ENCODE measurements at regions of chr17 and their contacts with region 1.

Region 1: GRCh38 chr17:7403977-7404736 is at the start of gene TMEM256:
- DNase-seq: peak; percentile 99
- H3K4me3 ChIP-seq: peak within 1 kb of the TSS; percentile 43 to 61 (median 52)
- H3K27ac ChIP-seq: peak within 1 kb of the TSS; percentile 21
- H3K4me1 ChIP-seq: peaks cover 12% of the 10 kb centered on the region
- H3K27me3 ChIP-seq: no peaks in the 10 kb centered on the region
- CTCF ChIP-seq: peak in 1 of 2 donors; percentile 2
- POLR2A ChIP-seq: peak; percentile 93
- total RNA-seq, gene TMEM256: 57.3 and 67.4 TPM in 2 replicates

Region 2: GRCh38 chr17:6959700-6960099 is 444.5 kb before region 1 on chr17:
- CTCF ChIA-PET with region 1: no interaction called
- POLR2A ChIA-PET with region 1: no interaction called
- dilution Hi-C with region 1: no loop called
- intact Hi-C with region 1: no loop called
- DNase-seq: no peak
- H3K4me3 ChIP-seq: no peak overlapping the region
- H3K27ac ChIP-seq: no peak overlapping the region
- H3K4me1 ChIP-seq: no peaks in the 10 kb centered on the region
- H3K27me3 ChIP-seq: peaks cover 5 to 14% of the 10 kb centered on the region in 2 experiments
- CTCF ChIP-seq: no peak
- POLR2A ChIP-seq: no peak

Region 3: DNA sequence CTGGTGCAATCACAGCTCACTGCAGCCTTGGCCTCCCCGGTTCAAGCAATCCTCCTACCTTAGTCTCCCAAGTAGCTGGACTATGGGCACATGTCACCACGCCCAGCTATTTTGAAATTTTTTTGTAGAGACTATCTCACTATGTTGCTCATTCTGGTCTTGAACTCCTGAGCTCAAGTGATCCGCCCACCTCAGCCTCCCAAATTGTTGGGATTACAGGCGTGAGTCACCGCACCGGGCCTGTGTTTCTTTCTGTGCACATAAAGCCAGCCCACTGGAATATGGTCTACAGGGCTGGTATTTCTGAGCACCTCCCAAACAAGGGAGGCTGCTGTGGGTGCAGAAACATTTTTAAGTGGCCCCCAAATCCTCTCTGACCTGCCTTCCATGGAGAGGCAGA is 40.8 kb before region 1 on chr17:
- CTCF ChIA-PET with region 1: no interaction called
- POLR2A ChIA-PET with region 1: no interaction called
- dilution Hi-C with region 1: no loop called
- intact Hi-C with region 1: no loop called
- DNase-seq: no peak
- H3K4me3 ChIP-seq: no peak overlapping the region
- H3K27ac ChIP-seq: no peak overlapping the region
- H3K4me1 ChIP-seq: no peaks in the 10 kb centered on the region
- H3K27me3 ChIP-seq: peaks cover 0 to 3% of the 10 kb centered on the region in 2 experiments
- CTCF ChIP-seq: no peak
- POLR2A ChIP-seq: no peak

Region 4: GRCh38 chr17:7466639-7467341 is 62.6 kb after region 1 on chr17:
- CTCF ChIA-PET with region 1: interaction called, 3 read pairs
- POLR2A ChIA-PET with region 1: interaction called, 11 read pairs
- dilution Hi-C with region 1: no loop called
- intact Hi-C with region 1: no loop called
- DNase-seq: peak; percentile 53
- H3K4me3 ChIP-seq: no peak overlapping the region
- H3K27ac ChIP-seq: no peak overlapping the region
- H3K4me1 ChIP-seq: no peaks in the 10 kb centered on the region
- H3K27me3 ChIP-seq: no peaks in the 10 kb centered on the region
- CTCF ChIP-seq: no peak
- POLR2A ChIP-seq: no peak

Measured in endothelial cell of umbilical vein (primary cell).